ENCODE measurements at regions of chr15 and their contacts with region 1.

Region 1: DNA sequence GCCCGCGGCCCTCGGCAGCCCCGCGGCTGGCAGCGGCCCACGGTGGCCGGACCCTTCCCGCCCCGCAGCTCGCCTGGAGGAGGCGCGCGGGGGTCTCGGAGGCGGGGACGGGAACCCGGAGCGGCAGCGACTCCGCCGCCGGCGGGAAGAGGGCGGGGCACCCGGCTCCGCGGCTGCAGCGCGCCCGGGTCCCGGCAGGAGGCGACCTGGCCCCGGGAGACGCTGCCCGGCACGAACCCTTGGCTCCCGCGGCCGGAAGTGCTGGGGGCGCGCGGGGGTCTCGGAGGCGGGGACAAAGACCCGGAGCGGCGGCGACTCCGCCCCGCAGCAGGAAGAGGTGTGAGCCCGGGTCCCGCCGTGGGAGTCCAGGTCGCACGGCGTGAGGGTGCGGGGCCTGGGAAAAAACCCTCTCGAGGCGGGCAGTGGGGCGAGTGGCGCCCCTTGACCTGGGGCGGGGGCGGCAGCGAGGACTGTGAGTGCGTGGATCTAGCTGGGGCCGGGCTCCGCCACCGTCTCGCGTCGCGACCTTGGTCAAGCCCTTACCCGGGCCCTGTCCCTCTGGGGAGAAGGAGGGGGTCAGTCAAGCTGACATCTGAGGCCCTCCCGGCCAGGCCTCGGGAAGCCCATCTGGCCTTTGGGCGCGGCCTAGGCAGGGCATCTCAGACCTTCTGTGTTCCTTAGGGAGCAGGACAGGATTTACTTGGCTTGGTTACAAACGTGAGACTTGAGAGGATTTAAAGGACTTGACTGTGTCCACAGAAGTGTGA is at the start of gene CIB2:
- H3K4me3 ChIP-seq: peak within 1 kb of the TSS; percentile 74
- H3K27ac ChIP-seq: peak within 1 kb of the TSS; percentile 85
- H3K4me1 ChIP-seq: peaks cover 2% of the 10 kb centered on the region; the same call in 1 of the 2 replicates
- CTCF ChIP-seq: peak; percentile 30; the same call in 1 of the 2 replicates

Region 2: GRCh38 chr15:77988347-77989295 is 142.9 kb before region 1 on chr15:
- CTCF ChIA-PET with region 1: no interaction called
- POLR2A ChIA-PET with region 1: no interaction called
- H3K4me3 ChIP-seq: no peak overlapping the region
- H3K27ac ChIP-seq: 0 out of 2 replicates have a peak overlapping the region, but pooled peaks have one; percentile 24
- H3K4me1 ChIP-seq: no peaks in the 10 kb centered on the region
- CTCF ChIP-seq: no peak

Region 3: GRCh38 chr15:78120523-78120922 is 11.0 kb before region 1 on chr15:
- CTCF ChIA-PET with region 1: interaction called, 12 read pairs
- POLR2A ChIA-PET with region 1: no interaction called
- H3K4me3 ChIP-seq: no peak overlapping the region
- H3K27ac ChIP-seq: no peak overlapping the region
- H3K4me1 ChIP-seq: 0 out of 2 replicates have a peak, but pooled peaks cover 2% of the 10 kb centered on the region
- CTCF ChIP-seq: no peak

Region 4: DNA sequence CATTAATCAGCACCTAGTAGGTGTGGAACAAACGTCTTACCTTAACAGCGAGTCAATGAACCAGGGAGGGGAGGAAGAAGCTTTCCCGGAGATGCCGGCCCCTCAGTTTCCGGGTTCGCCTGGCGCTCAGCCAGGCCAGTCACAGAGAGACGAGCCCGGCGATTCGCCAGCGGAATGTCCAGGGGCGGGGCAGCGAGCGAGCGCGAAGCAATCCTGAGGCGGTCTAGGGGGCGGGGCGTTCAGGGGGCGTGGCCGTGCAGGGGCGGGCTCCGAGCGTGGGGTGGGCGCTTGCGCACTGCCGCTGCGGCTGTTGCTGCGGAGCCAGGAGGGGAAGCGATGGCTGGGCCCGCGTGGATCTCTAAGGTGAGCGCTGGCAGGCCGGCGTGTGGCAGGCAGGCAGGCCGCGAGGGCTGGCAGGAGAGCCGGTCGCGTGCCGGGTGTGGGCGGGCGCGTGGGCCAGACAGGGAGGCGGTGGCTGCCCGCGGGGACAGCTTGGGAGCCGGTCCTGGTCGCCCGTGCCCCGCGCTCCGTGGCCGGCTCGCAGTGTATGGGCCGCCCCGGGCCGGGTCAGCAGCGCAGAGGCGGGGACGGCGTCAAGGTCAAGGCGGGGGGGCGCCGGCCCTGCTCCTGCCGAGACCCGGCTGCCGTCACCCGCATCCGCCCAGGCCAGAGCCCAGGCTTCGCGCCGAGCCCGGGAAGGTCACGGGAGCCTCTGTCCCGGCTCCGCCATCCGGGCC is 17.8 kb after region 1 on chr15 and contains the start of gene IDH3A:
- CTCF ChIA-PET with region 1: interaction called, 7 read pairs
- POLR2A ChIA-PET with region 1: interaction called, 17 read pairs
- H3K4me3 ChIP-seq: peak within 1 kb of the TSS; percentile 76
- H3K27ac ChIP-seq: peak within 1 kb of the TSS; percentile 77
- H3K4me1 ChIP-seq: peaks cover 12% of the 10 kb centered on the region
- CTCF ChIP-seq: no peak

Measured in HEK293 (cell line).